Right cardiac atrium (tissue), 5 donors: ENCODE measurements at regions of chr17 and their contacts with region 1.

Region 1: GRCh38 chr17:31524926-31525800 is 133.7 kb downstream of the RAB11FIP4 start:
- DNase-seq: peak; percentile 84 to 95 (median 93)
- ATAC-seq: peak; percentile 69 to 81
- H3K4me3 ChIP-seq: no peak overlapping the region
- H3K27ac ChIP-seq: no peak overlapping the region
- H3K4me1 ChIP-seq: no peaks in the 10 kb centered on the region
- H3K27me3 ChIP-seq: no peaks in the 10 kb centered on the region

Region 2: GRCh38 chr17:31394544-31394943 is 130.6 kb before region 1 on chr17:
- intact Hi-C with region 1: loop called in 1 of 4 experiments (anchors 5 kb)
- DNase-seq: peak; percentile 67 to 89 (median 86)
- ATAC-seq: peak; percentile 36
- H3K4me3 ChIP-seq: no peak overlapping the region
- H3K27ac ChIP-seq: no peak overlapping the region
- H3K4me1 ChIP-seq: no peaks in the 10 kb centered on the region
- H3K27me3 ChIP-seq: no peaks in the 10 kb centered on the region

Region 3: DNA sequence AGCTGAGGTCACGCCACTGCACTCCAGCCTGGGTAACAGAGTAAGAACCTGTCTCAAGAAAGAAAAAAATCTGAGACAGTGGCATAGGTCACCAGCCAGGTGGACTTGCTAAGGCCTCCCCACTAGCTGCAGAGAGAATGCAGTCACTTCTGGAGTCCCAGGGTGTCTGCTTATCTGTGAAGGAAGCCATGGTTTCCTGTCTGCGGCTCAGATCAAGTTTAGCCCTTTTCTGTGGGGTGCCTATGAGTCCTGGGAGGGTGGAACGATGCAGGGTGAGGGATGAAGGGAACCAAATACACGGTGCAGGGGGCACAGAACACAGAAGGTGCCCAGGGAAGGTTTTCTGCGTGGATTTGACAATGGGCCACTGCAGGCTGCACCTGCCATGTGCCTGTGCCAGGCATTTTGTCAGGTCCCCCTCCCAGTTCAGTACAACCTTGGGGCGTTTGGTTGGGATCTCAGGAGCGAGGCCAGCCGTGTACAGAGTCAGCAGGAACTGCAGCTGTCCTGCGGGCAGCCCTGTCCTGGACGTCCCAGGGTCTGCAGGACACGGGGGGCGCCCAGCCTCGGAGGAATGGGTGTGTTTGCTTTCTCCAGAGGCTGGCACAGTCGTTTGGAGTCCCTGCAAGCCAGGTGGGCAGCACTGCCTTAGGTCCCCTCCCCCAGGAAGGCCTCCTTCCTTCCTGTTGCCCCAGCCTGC is 91.9 kb before region 1 on chr17:
- intact Hi-C with region 1: loop called (anchors 2 to 5 kb)
- DNase-seq: no peak
- ATAC-seq: no peak
- H3K4me3 ChIP-seq: no peak overlapping the region
- H3K27ac ChIP-seq: no peak overlapping the region
- H3K4me1 ChIP-seq: no peaks in the 10 kb centered on the region
- H3K27me3 ChIP-seq: no peaks in the 10 kb centered on the region

Region 4: DNA sequence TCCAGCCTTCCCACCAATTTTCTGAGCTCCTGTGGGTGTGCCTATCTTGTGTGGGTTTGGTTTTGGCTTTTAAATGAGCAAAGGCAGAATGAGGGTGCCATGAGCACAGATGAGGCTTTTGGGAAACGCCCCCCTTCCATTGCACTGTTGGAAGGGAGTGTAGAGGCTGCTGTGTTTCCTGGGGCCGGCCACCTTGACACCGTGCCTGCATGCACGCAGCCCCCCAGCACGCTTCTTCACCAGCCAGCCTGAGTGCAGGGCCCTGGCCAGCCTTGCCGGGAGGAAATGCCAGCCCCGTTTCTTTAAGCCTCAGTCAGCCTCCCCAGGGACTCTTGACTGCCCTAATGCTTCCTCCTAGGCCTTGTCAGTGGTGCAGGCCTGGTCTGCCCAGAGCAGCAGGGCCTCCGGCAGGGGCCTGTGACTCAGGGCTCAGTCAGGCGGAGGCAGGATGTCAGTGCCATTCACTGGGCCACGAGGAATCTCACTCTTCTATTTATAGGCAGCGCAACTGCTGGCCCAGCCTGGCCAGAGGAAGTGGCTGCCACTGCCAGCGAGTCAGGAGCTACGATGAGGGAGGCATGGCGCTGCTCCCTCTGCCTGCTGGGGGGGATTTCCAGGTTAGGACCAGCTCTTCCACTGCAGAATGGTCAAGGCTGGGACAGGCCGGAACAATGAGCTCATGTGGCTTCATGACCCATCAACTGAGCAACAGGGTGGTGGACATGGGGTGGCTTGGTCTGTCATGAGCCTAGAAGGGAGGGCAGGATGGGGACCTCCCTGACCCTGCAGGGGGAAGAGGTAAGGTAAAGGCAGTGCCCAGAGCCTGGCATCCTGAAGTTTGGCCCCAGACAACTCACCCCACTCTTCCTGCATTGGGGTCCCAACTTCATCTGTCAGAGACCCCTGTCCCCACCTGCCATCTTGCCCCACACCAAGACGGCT is 71.5 kb after region 1 on chr17:
- intact Hi-C with region 1: no loop called
- DNase-seq: peak; percentile 78 to 87 (median 87)
- ATAC-seq: peak; percentile 92 to 95
- H3K4me3 ChIP-seq: no peak overlapping the region
- H3K27ac ChIP-seq: peak overlapping the region; percentile 87
- H3K4me1 ChIP-seq: peaks cover 8% of the 10 kb centered on the region
- H3K27me3 ChIP-seq: no peaks in the 10 kb centered on the region

Region 5: DNA sequence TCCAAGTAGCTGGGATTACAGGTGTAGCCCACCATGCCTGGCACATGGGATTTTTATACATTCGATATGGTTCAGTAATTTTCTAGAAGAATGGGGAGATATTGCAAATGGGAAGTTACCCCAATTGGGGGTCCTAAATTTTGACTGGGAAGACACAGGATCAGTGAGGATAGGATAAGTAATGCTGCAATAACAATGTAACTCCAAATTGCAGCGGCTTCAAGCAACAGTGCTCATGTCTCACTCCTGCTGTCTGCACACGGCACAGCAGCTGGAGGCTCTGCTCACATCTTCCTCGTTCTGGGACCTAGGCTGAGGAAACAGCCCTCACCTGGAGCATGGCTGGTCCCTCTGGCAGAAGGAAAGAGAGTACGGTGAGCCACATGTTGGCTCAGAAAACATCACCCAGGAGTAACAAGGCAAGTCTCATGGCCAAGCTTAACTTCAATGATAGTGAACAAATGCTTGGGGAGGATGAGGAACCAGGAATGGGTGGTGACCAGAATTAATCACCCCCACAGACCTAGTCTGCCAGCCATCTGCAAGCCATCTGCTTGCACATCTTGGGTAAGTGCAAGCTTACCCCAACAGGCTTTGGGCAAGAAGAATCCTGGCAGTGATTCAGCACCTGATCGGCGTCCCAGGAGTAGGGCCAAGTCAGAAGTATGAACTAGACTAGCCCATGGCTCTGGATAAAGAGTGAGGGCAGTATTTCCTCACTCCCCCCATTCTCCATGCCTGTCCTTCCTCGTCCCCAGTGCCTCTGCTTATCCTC is 104.7 kb after region 1 on chr17:
- intact Hi-C with region 1: no loop called
- DNase-seq: no peak
- ATAC-seq: no peak
- H3K4me3 ChIP-seq: no peak overlapping the region
- H3K27ac ChIP-seq: no peak overlapping the region
- H3K4me1 ChIP-seq: no peaks in the 10 kb centered on the region
- H3K27me3 ChIP-seq: no peaks in the 10 kb centered on the region

Region 6: GRCh38 chr17:32461853-32462617 is 936.9 kb after region 1 on chr17:
- intact Hi-C with region 1: no loop called
- DNase-seq: peak in 2 of 3 donors; percentile 39 to 59
- ATAC-seq: peak; percentile 49 to 52
- H3K4me3 ChIP-seq: no peak overlapping the region
- H3K27ac ChIP-seq: no peak overlapping the region
- H3K4me1 ChIP-seq: no peaks in the 10 kb centered on the region
- H3K27me3 ChIP-seq: no peaks in the 10 kb centered on the region